ENCODE measurements at regions of chr1 and their contacts with region 1.

Region 1: GRCh38 chr1:53959664-53960250 is 13.6 kb downstream of the LRRC42 start:
- DNase-seq: no peak
- ATAC-seq: peak; percentile 56
- H3K4me3 Mint-ChIP-seq: no peak overlapping the region
- H3K27ac Mint-ChIP-seq: no peak overlapping the region
- H3K4me1 Mint-ChIP-seq: peaks cover 2% of the 10 kb centered on the region
- H3K27me3 Mint-ChIP-seq: no peaks in the 10 kb centered on the region
- CTCF ChIP-seq: peak; percentile 21

Region 2: DNA sequence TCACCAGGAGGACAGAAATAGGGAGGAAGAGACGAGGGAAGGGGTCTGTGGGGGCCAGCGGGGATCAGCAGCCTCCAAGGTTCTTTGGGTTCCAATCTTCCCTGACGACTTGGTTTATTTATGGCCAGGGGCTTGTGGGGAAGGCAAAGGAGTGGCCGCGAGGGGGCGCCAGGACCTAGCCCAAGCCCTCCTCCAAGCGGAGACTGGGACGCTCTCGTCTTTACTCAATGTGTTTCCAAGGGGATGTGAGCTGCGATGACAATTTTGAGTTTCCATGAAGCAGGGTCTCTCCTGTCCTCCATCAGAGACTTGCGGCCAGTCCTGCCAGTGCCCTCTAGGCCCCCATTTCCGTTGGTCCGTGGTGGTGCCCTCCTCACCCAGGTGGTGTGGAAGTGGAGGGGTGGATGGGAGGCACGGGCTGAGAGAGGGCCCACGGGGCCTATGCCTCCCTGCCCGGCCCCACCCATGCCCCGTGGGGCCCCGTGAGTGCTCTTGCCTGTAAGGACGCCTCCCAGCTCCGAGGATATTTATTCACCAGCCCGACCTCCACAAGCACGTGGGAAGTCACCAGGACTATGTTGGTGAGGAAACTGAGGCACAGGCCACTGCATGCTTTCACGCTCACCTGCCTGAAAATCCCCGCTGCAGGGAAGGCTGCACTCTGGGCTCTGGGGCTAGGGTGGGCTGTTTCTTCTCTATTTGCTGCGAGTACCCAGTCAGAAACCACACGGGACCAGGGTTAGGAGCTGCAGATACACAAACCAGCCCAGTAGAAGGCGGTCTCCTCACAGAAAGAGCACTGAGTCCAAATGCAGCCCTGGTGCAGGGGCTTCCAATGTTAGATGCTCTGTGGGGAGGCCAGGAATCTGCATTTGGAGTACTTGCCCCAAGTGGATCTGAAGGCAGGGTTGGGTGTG is 474.0 kb before region 1 on chr1:
- CTCF ChIA-PET with region 1: no interaction called
- POLR2A ChIA-PET with region 1: no interaction called
- intact Hi-C with region 1: loop called (anchors 5 kb)
- DNase-seq: peak; percentile 36
- ATAC-seq: no peak
- H3K4me3 Mint-ChIP-seq: no peak overlapping the region
- H3K27ac Mint-ChIP-seq: no peak overlapping the region
- H3K4me1 Mint-ChIP-seq: peaks cover 4% of the 10 kb centered on the region
- H3K27me3 Mint-ChIP-seq: peaks cover 33% of the 10 kb centered on the region
- CTCF ChIP-seq: no peak

Region 3: DNA sequence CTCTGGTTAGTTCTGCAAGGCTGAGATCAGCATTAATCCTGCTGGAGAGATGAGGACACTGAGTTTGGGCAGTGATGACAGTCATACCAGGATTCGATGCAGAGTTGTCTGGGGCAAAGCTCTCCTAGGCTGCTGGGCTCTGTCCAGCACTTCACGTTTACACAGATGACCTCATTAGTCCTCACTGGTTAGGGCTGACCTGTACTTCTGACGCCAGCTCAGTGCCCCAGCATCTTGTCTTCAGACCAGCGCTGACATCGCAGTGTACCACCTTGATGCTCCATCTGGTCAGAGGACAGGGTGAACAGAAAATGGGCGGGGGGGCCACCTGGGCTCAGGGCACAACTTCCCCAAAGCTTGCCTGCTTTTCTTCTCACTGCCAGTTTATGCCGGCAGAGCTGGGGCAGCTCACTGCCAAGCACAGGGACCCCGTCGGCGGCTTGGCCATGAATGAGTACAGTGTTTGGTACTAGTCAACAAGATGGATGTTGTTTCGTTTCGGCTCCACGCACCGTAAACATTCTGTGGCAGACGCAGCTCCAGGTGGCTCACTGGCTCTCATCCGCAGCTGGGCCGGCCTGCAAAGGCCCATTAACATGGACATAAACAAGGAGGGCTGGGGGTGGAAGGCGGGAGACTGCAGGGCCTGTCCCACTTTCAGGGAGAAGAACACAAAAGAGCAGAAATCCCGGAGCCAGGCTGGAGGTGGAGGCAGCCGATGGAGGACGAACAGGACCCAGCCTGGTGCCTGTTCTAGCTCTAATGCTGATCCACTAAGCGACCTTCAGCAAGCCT is 339.5 kb before region 1 on chr1:
- CTCF ChIA-PET with region 1: no interaction called
- POLR2A ChIA-PET with region 1: no interaction called
- intact Hi-C with region 1: no loop called
- DNase-seq: no peak
- ATAC-seq: no peak
- H3K4me3 Mint-ChIP-seq: no peak overlapping the region
- H3K27ac Mint-ChIP-seq: no peak overlapping the region
- H3K4me1 Mint-ChIP-seq: no peaks in the 10 kb centered on the region
- H3K27me3 Mint-ChIP-seq: peaks cover 3% of the 10 kb centered on the region
- CTCF ChIP-seq: no peak

Region 4: GRCh38 chr1:53878492-53879105 is 81.2 kb before region 1 on chr1:
- CTCF ChIA-PET with region 1: interaction called, 40 read pairs
- POLR2A ChIA-PET with region 1: interaction called, 7 read pairs
- intact Hi-C with region 1: loop called (anchors 1 kb)
- DNase-seq: no peak
- ATAC-seq: no peak
- H3K4me3 Mint-ChIP-seq: no peak overlapping the region
- H3K27ac Mint-ChIP-seq: no peak overlapping the region
- H3K4me1 Mint-ChIP-seq: no peaks in the 10 kb centered on the region
- H3K27me3 Mint-ChIP-seq: no peaks in the 10 kb centered on the region
- CTCF ChIP-seq: peak; percentile 56